HCT116 (cell line): ENCODE measurements at regions of chr2 and their contacts with region 1.

Region 1: GRCh38 chr2:231052494-231053451 is 3.9 kb upstream of the PSMD1 start:
- DNase-seq: peak; percentile 68
- ATAC-seq: peak; percentile 86
- H3K4me3 ChIP-seq: peak overlapping the region; percentile 46 to 61
- H3K27ac ChIP-seq: peak overlapping the region; percentile 16; the same call in 1 of the 2 replicates
- H3K4me1 ChIP-seq: peaks cover 4 to 24% of the 10 kb centered on the region in 2 experiments; a peak in 3 of 4 replicates
- H3K27me3 ChIP-seq: no peaks in the 10 kb centered on the region
- CTCF ChIP-seq: peak; percentile 87 to 97 (median 92)
- POLR2A ChIP-seq: no peak
- RAD21 ChIP-seq: peak; percentile 61

Region 2: GRCh38 chr2:230520875-230521155 is 532.0 kb before region 1 on chr2:
- CTCF ChIA-PET with region 1: no interaction called
- POLR2A ChIA-PET with region 1: no interaction called
- RAD21 ChIA-PET with region 1: no interaction called
- intact Hi-C with region 1: no loop called
- DNase-seq: no peak
- ATAC-seq: no peak
- H3K4me3 ChIP-seq: no peak overlapping the region
- H3K27ac ChIP-seq: no peak overlapping the region
- H3K4me1 ChIP-seq: no peaks in the 10 kb centered on the region
- H3K27me3 ChIP-seq: no peaks in the 10 kb centered on the region
- CTCF ChIP-seq: no peak
- POLR2A ChIP-seq: no peak
- RAD21 ChIP-seq: no peak

Region 3: GRCh38 chr2:230824406-230824978 is 228.3 kb before region 1 on chr2:
- CTCF ChIA-PET with region 1: interaction called, 26 read pairs
- POLR2A ChIA-PET with region 1: interaction called, 5 read pairs
- RAD21 ChIA-PET with region 1: no interaction called
- intact Hi-C with region 1: loop called (anchors 1 kb)
- DNase-seq: peak; percentile 77
- ATAC-seq: peak; percentile 93
- H3K4me3 ChIP-seq: peak overlapping the region in 1 of 2 experiments; percentile 13; a peak in 1 of 4 replicates
- H3K27ac ChIP-seq: no peak overlapping the region
- H3K4me1 ChIP-seq: peaks cover 0 to 3% of the 10 kb centered on the region in 2 experiments; a peak in 1 of 4 replicates
- H3K27me3 ChIP-seq: no peaks in the 10 kb centered on the region
- CTCF ChIP-seq: peak; percentile 50 to 85 (median 71)
- POLR2A ChIP-seq: no peak
- RAD21 ChIP-seq: peak; percentile 93

Region 4: DNA sequence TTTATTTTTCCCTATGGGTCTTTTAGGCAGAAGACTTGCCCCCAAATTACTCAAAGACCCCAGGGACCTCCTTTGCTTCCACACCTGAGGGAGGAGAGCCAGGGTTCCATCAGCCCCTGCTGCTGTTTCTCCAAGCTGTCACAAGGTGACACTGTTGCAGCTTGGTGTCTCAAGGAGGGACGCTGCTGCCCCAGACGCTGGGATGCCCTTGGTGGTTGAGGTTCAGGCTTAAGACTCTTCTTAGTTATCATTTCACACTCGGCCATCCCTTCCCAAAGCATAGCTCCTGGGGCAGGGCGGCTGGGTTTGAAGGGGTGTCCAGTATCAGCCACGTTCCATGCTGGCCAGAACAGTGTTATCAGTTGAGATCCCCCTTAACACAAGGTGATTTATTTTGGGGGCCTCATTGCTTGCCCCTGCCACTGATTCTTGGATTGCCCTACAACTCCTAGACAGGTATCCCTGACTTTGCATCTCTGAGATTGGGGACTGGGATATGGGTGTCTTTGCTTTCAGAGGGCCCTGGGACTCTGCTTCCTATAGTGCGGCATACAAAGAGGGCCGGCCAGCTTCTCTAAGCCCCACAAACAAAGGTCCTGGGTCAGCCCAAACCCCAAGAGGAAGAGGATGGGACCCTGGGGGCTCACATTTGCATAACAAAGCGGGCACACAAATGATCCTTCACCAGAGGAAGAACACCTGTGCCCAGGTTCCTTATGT is 150.4 kb before region 1 on chr2:
- CTCF ChIA-PET with region 1: interaction called, 13 read pairs
- POLR2A ChIA-PET with region 1: no interaction called
- RAD21 ChIA-PET with region 1: no interaction called
- intact Hi-C with region 1: loop called (anchors 1 kb)
- DNase-seq: peak; percentile 54
- ATAC-seq: peak; percentile 73
- H3K4me3 ChIP-seq: no peak overlapping the region
- H3K27ac ChIP-seq: no peak overlapping the region
- H3K4me1 ChIP-seq: peaks cover 15 to 22% of the 10 kb centered on the region in 2 experiments
- H3K27me3 ChIP-seq: peaks cover 33% of the 10 kb centered on the region; the same call in 1 of the 2 replicates
- CTCF ChIP-seq: peak; percentile 92 to 94 (median 92)
- POLR2A ChIP-seq: no peak
- RAD21 ChIP-seq: peak; percentile 95

Region 5: GRCh38 chr2:231007286-231008007 is 45.3 kb before region 1 on chr2:
- CTCF ChIA-PET with region 1: no interaction called
- POLR2A ChIA-PET with region 1: no interaction called
- RAD21 ChIA-PET with region 1: no interaction called
- intact Hi-C with region 1: no loop called
- DNase-seq: no peak
- ATAC-seq: no peak
- H3K4me3 ChIP-seq: no peak overlapping the region
- H3K27ac ChIP-seq: no peak overlapping the region
- H3K4me1 ChIP-seq: no peaks in the 10 kb centered on the region
- H3K27me3 ChIP-seq: peaks cover 7% of the 10 kb centered on the region; the same call in 1 of the 2 replicates
- CTCF ChIP-seq: no peak
- POLR2A ChIP-seq: no peak
- RAD21 ChIP-seq: no peak

Region 6: GRCh38 chr2:231029563-231029962 is 23.2 kb before region 1 on chr2:
- CTCF ChIA-PET with region 1: interaction called, 10 read pairs
- POLR2A ChIA-PET with region 1: no interaction called
- RAD21 ChIA-PET with region 1: no interaction called
- intact Hi-C with region 1: no loop called
- DNase-seq: no peak
- ATAC-seq: no peak
- H3K4me3 ChIP-seq: no peak overlapping the region
- H3K27ac ChIP-seq: no peak overlapping the region
- H3K4me1 ChIP-seq: no peaks in the 10 kb centered on the region
- H3K27me3 ChIP-seq: no peaks in the 10 kb centered on the region
- CTCF ChIP-seq: no peak
- POLR2A ChIP-seq: no peak
- RAD21 ChIP-seq: no peak

Region 7: DNA sequence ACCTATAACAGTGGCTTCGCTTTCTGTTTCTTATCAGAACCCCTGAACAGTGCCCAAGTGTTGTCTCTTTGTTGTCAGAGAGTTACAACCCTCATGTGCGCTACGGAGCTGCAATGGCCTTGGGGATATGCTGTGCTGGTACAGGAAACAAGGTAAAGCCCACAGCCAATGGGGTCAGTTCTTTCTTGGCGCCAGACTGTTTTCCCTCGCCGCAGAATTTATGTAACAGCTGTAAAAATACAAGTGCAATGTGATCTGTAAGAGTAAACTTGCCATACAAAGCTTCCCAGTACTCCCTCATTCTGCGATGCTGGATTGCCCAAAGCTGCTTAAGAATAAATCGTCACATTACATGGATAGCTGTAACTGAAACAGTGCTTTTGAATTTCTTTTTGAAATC is 85.9 kb after region 1 on chr2:
- CTCF ChIA-PET with region 1: no interaction called
- POLR2A ChIA-PET with region 1: no interaction called
- RAD21 ChIA-PET with region 1: no interaction called
- intact Hi-C with region 1: no loop called
- DNase-seq: no peak
- ATAC-seq: no peak
- H3K4me3 ChIP-seq: no peak overlapping the region
- H3K27ac ChIP-seq: no peak overlapping the region
- H3K4me1 ChIP-seq: no peaks in the 10 kb centered on the region
- H3K27me3 ChIP-seq: no peaks in the 10 kb centered on the region
- CTCF ChIP-seq: no peak
- POLR2A ChIP-seq: no peak
- RAD21 ChIP-seq: no peak